Right ventricle myocardium superior (tissue), 1 donor: ENCODE measurements at regions of chr7 and their contacts with region 1.

Region 1: DNA sequence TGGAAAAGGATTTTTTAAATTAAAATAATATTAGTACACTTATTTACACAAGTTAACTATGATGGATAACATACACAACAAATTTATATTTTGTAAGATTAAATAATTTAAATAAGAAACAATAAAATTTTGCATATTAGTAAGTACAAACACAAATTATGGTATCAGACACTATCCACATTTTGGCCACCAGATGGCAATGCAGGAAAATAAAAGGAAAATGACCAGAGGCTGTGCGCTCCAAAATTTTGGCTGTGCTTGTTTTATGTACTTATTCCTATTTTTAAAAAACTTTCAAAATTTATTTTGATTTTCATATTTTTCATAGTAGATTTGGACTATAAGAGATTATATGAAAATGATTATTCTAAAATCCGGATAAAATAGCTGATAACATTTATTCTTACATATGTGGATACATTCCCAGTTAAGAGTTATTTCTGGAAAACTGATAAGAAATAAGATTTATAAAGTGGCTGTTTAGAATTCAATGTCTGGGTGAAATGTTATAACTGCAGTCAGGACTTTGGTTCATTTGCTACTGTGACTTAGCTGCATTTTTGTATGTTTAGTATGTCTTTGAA is 274.7 kb upstream of the HGF start:
- DNase-seq: no peak
- ATAC-seq: peak; percentile 73

Region 2: DNA sequence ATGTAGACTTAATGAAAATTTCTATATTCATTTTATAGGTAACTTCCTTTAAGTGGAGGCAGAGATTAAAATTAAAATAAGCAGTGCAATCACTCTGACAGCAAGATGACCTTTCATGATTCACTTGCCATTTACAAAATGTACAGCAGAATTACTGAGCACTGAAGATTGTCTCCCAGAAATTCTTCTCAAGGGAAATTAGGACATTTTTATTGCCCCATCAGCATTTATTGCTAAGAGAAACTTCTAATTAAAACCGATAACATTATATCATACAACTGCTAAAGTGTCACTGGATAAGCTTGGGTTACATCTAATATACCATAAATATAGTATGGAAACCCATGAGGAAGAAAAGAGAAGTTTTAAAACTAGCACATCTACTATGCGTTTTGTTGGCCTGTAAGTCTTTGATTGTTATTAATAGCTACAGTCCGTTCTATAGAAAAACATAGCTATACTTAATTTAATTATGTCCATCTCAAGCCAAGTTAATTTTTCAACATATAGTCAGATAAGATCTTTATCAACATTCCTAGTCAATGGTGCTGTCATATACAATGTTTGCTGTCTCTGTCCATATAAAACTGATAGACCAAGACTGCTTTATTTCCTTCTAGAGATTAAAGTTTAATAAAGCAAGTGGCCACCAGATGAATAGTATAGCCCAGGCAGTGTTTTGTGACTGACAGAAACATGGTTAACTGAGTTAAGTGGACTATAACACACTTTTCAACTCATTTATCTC is 57.7 kb before region 1 on chr7:
- intact Hi-C with region 1: no loop called
- DNase-seq: no peak
- ATAC-seq: no peak

Region 3: DNA sequence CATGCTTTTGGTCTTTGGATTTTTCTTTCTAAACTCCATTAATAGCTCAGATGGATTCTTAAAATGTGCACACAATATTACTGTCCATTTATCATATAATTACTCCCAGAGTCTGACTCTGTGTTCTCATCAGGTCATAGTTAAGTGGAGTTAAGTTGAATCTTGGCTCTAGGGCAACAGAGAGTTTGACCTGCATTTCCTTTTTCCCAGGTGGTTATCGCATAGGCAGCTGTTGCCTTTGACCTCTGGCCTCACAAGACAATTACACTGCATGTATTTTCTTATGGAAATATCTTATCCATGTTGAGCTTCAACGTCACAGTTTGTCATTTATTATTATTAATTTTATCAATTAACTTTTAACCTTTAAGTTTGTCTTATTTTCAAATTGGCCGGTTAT is 37.3 kb before region 1 on chr7:
- intact Hi-C with region 1: no loop called
- DNase-seq: no peak
- ATAC-seq: no peak

Region 4: DNA sequence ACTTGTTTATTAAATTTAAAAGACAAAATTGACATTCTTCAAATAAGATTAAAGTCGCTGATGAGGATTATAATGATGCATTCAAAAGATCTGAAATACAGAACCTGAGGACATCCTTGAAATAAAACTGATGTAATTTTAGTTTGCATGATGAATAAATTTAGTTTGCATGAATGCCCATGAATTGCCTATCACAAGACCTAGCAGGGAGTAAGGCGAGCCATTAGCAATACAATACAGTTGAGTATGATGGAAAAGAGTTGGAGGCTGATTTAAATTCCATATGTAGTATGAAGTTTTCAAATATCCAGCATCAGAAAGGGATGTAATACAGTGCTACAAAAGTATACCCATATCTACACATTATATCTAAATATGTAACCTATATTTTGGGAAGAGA is 77.7 kb after region 1 on chr7:
- intact Hi-C with region 1: no loop called
- DNase-seq: no peak
- ATAC-seq: no peak

Region 5: DNA sequence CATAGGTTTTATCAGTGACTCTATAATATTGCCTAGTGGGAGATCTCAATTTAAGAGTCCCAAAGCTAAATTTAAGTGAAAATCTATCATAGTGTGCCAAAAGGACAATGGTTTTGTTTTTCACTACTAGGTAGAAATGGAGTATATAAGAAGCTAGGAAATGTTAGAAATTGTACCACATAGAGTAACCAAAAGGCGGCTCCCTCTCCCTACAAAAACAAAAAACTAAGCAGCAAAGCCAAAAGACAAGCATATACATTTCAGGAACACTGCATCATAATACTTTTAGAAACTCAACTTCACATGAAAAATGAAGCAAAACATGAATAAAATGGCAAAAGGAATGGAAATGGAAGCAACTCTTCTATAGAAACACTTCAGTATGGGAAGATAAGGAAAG is 127.4 kb after region 1 on chr7:
- intact Hi-C with region 1: no loop called
- DNase-seq: no peak
- ATAC-seq: no peak

Region 6: DNA sequence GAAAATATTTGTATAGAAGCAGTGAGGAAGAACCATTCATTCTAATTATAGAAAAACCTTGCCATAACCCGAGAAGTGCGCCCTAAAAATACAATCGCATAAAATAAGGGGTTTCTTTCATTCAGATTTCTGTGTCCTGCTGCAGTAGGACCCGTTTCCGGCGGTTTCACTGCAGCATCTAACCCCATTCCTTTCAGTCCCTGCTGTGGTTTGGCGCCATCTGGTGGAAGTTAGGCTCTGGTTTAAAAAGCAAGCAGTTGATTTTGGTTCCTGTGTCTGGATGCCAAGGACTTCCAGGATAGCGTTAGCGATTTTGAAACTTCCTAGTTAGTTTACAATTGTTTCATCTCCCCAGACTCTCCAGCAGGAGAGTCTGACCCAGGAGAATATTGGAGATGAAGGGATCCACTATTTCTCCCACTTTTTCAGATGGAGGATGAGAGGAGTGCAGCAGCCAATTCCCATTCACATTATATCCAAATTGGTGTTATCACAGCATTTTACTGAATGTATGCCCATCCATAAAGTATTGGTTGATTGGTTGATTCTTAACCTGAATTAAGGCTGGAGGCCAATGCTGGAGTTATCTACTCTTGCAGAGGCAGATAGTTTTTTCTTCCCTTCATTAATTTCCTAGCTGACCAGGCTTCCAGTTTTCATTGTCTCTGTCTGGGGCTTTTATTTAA is 527.7 kb after region 1 on chr7:
- intact Hi-C with region 1: loop called (anchors 5 kb)
- DNase-seq: peak; percentile 82
- ATAC-seq: peak; percentile 97

Region 7: GRCh38 chr7:82605247-82605872 is 560.8 kb after region 1 on chr7:
- intact Hi-C with region 1: loop called (anchors 10 kb)
- DNase-seq: no peak
- ATAC-seq: no peak